Activated naive CD4-positive, alpha-beta T cell treated with anti-CD3 and anti-CD28 coated beads for 36 hours (primary cell): ENCODE measurements at regions of chr2 and their contacts with region 1.

Region 1: GRCh38 chr2:189287982-189288521 is 108.5 kb upstream of the COL5A2 start:
- DNase-seq: no peak
- H3K4me3 Mint-ChIP-seq: no peak overlapping the region
- H3K27ac Mint-ChIP-seq: peak overlapping the region; percentile 80
- H3K4me1 Mint-ChIP-seq: peaks cover 66% of the 10 kb centered on the region
- H3K27me3 Mint-ChIP-seq: no peaks in the 10 kb centered on the region

Region 2: DNA sequence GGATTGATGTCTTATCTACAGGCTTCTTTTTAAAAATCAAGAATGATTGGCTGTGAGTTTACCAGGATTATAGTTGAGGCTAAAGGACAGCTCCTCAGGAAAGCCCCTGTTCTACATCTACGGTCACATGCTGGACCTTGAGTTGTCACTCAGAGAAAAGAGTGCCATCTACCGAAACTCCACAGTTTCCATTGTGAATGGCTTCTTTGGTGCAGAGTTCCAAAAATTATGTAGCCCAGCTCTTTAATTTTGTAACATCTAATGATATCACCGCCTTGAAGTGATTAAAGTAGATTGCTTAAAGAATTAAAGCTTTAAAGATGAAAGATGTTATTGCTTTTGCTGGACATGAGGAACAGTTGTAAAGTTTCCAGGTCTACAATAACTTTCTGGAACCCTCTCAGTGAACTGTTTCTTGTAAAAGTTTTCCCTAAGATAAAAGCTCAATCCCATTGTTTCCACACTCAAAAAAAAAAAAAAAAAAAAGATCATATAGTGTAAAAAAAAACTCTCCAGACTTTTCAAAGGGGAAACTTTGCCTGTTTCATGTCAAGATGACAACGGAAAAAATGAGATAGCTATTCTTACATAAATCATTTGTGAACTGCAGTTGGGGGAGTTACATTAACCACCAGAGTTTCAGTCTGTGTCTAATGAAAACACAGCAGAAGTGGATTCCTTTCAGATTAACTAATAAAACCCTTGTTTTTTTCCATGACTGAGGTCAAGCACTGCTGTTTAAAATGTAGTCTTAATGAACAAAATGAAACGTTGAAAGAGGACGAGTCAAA is 309.6 kb before region 1 on chr2:
- CTCF ChIA-PET with region 1: no interaction called
- intact Hi-C with region 1: loop called (anchors 2 kb)
- DNase-seq: peak; percentile 6
- H3K4me3 Mint-ChIP-seq: peak overlapping the region; percentile 7
- H3K27ac Mint-ChIP-seq: peak overlapping the region; percentile 51
- H3K4me1 Mint-ChIP-seq: peaks cover 19% of the 10 kb centered on the region
- H3K27me3 Mint-ChIP-seq: peaks cover 19% of the 10 kb centered on the region

Region 3: GRCh38 chr2:189142893-189143759 is 144.9 kb before region 1 on chr2:
- CTCF ChIA-PET with region 1: interaction called, 30 read pairs
- intact Hi-C with region 1: loop called (anchors 1 kb)
- DNase-seq: peak; percentile 68
- H3K4me3 Mint-ChIP-seq: no peak overlapping the region
- H3K27ac Mint-ChIP-seq: no peak overlapping the region
- H3K4me1 Mint-ChIP-seq: peaks cover 3% of the 10 kb centered on the region
- H3K27me3 Mint-ChIP-seq: no peaks in the 10 kb centered on the region

Region 4: DNA sequence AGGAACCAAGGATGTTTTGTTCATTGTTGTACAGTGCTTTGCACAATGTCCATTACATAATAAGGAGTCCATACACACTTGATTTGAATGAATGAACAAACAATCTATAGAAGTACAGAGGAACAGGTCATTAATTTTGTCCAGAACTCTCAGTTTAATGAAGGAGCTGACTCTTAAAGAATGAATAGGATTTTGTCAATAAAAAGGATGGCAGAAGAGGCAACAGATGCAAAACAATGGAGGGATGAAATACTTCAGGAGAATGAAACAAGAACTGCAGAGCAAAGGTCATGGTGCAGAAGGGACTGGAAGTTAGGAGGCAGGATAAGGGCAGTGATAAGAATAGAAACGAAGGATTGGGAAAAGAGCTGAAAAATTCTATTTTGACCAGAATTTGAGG is 79.8 kb before region 1 on chr2:
- CTCF ChIA-PET with region 1: no interaction called
- intact Hi-C with region 1: no loop called
- DNase-seq: no peak
- H3K4me3 Mint-ChIP-seq: no peak overlapping the region
- H3K27ac Mint-ChIP-seq: no peak overlapping the region
- H3K4me1 Mint-ChIP-seq: peaks cover 35% of the 10 kb centered on the region
- H3K27me3 Mint-ChIP-seq: no peaks in the 10 kb centered on the region

Region 5: DNA sequence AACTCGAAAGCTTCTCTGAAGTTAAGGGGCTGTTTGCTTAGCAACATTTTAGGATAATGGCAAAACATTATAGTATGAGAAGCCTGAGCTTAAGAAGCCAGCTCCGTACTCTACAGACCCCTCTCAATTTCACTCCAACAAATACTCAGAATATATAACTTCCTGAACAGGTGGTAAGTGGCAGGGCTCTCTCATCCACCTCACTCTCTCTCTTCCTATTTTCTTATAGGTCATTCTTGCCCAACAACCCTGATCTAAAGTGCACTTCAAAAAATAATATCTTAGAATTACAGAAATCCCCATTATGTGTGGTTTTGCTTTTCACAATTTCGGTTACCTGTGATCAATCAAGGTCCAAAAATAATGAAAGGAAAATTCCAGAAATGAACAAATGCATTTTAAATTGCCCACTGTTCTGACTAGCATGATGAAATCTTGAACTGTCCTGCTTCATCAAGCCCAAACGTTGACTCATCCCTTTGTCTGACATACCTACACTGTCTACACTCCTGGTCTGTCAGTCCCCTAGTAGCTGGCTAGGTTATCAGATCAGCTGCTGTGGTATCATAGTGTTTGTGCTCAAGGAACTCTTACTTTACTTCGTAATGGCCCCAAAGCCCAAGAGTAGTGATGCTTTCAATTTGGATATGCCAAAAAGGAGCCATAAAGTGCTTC is 14.4 kb after region 1 on chr2:
- CTCF ChIA-PET with region 1: interaction called, 7 read pairs
- intact Hi-C with region 1: loop called (anchors 1 kb)
- DNase-seq: peak; percentile 41
- H3K4me3 Mint-ChIP-seq: peak overlapping the region; percentile 7
- H3K27ac Mint-ChIP-seq: peak overlapping the region; percentile 91
- H3K4me1 Mint-ChIP-seq: peaks cover 79% of the 10 kb centered on the region
- H3K27me3 Mint-ChIP-seq: no peaks in the 10 kb centered on the region

Region 6: GRCh38 chr2:189440947-189441708 is 153.1 kb after region 1 on chr2 and contains the start of gene WDR75:
- CTCF ChIA-PET with region 1: interaction called, 3 read pairs
- intact Hi-C with region 1: loop called (anchors 1 kb)
- DNase-seq: peak; percentile 95
- H3K4me3 Mint-ChIP-seq: no peak within 1 kb of the TSS
- H3K27ac Mint-ChIP-seq: peak within 1 kb of the TSS; percentile 97
- H3K4me1 Mint-ChIP-seq: peaks cover 12% of the 10 kb centered on the region
- H3K27me3 Mint-ChIP-seq: no peaks in the 10 kb centered on the region
- total RNA-seq, gene WDR75: 69.7 to 72.7 TPM